BJ (cell line): ENCODE measurements at regions of chr21 and their contacts with region 1.

Region 1: DNA sequence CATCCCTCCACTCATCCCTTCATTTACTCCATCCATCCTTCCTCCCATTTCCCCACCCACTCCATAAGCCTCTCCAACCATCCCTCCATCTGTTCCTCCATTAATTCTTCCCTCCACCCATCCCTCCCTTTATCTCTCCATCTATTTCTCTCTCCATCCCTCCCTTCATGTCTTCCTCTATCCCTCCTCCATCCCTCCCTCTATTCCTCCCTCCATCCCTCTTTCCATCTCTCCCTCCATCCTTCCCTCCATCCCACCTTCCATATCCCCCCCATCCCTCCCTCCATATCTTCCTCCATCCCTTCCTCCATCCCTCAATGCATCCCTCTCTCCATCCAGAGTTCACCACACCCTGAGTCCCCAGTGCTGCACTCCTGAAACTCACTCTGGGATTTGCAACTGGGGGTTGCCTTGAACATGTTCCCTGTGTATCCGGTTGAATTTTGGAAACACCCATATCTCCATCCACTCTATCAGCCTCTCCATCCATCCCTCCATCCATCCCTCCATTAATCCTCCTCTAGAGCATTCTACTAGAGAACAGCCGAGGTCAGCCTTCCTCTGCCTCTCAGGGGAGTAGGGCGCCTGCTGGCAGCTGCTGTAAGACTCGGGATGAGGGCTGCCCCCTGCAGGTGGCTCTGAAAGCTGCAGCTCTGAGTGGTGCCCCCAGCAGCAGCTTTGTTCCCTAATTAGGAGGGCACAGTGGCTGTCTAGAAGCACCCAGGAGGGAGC is 39.4 kb downstream of the ABCG1 start:
- DNase-seq: no peak
- H3K4me3 ChIP-seq: no peak overlapping the region
- H3K27me3 ChIP-seq: no peaks in the 10 kb centered on the region; the same call in none of the 2 replicates
- CTCF ChIP-seq: peak; percentile 87

Region 2: DNA sequence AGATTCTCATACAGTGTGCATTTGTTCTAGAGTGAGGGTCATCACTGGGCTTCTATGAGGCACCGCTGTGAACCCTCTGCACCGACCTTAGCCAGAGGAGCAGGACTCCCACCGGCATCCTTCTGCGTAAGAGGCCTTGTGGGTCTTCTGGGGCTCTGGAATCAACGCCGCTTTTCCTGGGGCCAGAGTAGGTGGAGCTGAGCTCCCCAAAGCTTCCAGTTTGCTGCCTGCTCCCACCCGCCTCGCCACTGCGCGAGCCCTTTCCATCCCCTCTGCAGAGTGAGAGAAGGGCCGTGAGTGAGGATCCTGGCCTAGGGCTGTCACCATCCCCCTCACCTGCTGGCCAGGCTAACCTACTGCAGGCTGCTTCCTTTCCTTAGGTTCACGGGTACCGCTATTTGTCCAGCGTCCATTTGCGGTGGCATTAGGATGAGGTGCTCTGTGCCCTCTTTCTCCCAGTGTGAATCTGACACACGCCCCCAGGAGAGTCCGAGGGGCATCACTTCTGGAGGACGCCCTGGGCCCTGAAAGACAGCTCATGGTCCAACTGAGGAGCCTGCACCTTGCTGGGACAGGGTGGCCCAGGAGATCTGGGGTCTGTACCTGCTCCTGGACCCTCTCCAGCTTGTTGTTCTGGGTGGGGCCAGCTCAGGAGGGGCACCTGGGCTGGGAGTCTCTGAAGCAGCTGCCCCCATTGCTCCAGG is 151.0 kb before region 1 on chr21:
- CTCF ChIA-PET with region 1: no interaction called
- POLR2A ChIA-PET with region 1: no interaction called
- DNase-seq: no peak
- H3K4me3 ChIP-seq: no peak overlapping the region
- H3K27me3 ChIP-seq: no peaks in the 10 kb centered on the region; the same call in 1 of the 2 replicates
- CTCF ChIP-seq: no peak

Region 3: DNA sequence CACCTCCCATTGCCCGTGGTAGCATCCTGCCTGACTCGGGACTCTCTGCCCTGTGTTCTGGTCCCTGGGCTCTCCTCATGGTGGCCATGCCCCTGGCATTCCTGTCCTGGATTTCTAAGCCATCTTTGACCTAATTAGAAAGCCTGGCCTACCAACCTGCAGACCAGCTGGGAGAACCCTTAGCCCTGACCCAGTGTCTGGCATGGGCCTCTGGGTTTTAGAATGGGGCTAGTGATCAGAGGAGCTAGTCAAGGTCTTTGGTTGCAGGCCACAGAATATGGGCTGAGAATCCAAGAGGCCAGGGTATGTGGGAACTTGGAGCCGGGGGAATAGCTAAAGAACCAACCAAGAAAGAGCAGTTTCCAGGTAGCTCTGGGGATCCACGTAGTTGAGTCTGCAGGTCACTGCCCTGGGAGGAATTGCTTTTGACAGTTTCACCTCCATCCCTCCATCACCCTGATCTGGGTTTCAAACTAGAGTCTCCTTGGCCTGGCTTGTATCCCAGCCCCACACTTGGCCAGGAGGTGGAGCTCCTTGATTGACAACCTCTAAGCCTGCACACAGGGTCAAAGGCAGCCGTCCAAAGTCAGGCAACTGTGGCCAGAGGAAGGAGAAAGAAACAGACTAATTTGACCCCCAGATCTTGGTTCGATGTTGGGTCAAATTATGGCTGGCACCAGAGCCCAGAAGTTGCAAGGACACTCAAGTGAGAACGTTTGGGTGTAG is 94.1 kb before region 1 on chr21:
- CTCF ChIA-PET with region 1: interaction called, 13 read pairs
- POLR2A ChIA-PET with region 1: no interaction called
- DNase-seq: no peak
- H3K4me3 ChIP-seq: no peak overlapping the region
- H3K27me3 ChIP-seq: peaks cover 1% of the 10 kb centered on the region; the same call in 1 of the 2 replicates
- CTCF ChIP-seq: no peak

Region 4: DNA sequence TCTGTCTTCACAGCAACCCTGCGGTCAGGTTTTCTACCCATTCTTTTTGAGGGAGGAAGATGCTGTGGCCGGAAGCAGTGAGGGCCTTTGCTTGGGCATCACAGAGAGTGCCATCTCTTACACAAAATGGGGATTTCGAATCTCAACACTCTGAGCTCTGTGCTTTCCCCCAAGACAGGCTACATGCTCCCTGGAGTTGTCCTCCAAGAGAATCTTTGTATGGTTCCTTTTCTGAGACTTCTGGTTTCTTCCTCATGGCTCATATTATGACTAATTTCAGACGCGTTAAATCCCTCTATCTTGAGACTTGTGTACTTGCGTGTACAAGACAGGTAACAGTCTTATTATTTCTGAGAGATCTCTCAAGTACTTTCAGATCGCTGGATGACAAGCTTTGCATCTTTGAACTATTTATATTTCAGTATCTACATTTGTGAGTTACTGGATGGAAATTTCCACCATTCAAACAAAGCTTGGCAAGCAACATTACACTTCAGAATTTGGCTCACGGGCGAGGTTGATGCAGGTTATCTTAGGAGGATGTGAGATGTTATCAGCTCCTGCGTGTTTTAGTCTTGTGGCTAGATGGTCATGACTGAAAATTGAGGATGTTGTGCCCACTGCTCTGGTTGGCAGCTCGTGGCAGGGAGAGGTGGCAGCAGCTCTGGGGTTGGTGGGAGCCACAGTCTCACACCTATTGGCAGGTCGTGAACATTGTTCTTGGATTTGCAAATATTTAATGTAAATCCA is 20.0 kb before region 1 on chr21:
- CTCF ChIA-PET with region 1: interaction called, 15 read pairs
- POLR2A ChIA-PET with region 1: no interaction called
- DNase-seq: no peak
- H3K4me3 ChIP-seq: no peak overlapping the region
- H3K27me3 ChIP-seq: peaks cover 6% of the 10 kb centered on the region
- CTCF ChIP-seq: no peak

Region 5: DNA sequence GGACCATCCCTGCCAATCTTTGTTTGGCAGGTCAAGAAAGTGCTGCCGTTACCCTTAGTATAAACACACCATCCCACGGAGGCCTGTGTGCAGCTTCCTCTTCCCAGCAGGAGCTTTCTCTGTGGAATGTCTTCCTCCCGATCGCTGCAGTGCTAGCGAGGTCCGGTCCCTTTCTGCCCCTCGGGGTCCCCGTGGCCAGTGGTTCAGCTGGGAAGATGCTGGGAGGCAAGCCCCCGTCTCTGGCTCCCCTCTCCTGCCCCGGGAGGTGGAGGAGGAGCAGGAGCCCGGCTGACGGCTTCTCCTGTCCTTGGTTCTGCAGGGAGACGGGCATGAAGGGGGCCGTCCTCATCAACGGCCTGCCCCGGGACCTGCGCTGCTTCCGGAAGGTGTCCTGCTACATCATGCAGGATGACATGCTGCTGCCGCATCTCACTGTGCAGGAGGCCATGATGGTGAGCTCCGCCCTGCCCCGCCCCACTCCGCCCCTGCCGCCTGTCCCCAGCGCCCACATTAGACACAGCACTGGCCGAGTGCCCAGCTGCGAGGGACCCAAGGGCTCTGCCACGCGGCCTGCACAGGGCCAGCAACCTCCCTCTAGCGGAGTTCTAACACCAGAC is 14.8 kb after region 1 on chr21:
- CTCF ChIA-PET with region 1: interaction called, 14 read pairs
- POLR2A ChIA-PET with region 1: no interaction called
- DNase-seq: no peak
- H3K4me3 ChIP-seq: no peak overlapping the region
- H3K27me3 ChIP-seq: no peaks in the 10 kb centered on the region; the same call in 1 of the 2 replicates
- CTCF ChIP-seq: no peak

Region 6: GRCh38 chr21:42330380-42331359 is 72.4 kb after region 1 on chr21:
- CTCF ChIA-PET with region 1: no interaction called
- POLR2A ChIA-PET with region 1: no interaction called
- DNase-seq: no peak
- H3K4me3 ChIP-seq: no peak overlapping the region
- H3K27me3 ChIP-seq: no peaks in the 10 kb centered on the region
- CTCF ChIP-seq: no peak